ENCODE measurements at regions of chr15 and their contacts with region 1.

Region 1: DNA sequence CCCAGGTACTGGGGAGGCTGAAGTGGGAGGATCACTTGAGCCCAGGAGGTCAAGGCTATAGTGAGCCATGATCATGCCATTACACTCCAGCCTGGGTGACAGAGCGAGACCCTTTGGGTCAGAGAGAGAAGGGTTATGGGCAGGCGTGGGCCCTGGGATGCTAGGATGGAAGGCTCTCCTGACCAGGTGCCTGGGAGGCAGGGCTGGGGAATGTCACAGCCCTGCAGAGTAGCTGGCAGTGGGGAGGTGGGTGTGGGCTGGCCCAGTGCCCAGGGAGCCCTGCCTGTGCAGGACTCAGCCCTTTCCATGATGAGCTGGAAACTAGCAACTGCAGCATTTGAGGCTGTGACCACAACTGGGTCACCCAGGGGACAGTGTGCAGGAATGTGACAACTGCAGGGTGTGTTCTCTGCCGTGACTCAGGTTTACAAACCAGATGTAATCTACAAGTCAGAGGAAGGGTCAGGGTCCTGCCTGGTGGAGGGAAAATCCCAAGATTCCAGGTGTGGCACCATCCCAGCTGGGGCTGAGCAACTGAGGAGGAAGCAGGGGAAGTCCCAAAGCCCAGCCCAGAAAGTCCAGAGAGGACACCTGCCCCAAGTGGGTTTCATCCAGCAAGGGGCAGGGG is 45.4 kb downstream of the SLC28A1 start:
- DNase-seq: no peak
- CTCF ChIP-seq: no peak

Region 2: DNA sequence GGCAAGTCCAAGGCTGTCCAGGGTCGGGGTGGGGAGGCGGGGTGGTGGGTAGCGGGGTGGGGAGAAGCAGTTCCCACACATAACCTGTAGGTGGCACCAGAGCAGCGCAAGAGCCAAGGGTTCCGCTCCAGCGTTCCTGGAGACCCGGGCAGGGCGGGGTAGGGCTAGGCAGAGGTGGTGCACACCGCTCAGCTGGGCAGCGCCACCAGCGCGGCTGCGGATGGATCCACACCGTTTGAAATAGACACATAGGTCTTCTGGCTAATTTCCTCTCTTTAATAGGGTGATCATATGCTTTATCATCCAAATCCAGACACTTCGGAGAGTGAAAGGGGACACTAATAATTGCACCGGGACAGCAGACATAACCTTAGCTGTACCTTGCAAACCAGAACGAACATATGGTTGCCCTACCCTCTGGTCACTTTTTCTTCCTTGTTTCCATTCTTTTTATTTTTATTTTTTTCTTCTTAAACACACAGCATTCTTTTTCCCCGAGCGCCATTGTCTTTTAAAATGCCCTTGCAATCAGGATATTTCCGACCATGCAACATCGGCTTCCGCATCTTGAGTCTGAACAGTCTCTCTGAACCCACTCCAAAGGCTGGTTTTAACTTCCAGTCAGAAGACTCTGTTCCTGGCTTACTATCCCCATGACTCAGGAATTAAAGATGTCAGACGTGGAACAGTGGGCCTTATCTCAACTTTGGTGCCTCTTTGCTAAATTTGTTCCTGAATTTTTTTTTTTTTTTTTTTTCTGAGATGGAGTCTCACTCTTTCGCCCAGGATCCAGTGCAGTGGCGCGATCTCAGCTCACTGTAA is 341.6 kb before region 1 on chr15:
- CTCF ChIA-PET with region 1: interaction called, 50 read pairs
- POLR2A ChIA-PET with region 1: no interaction called
- DNase-seq: peak; percentile 90
- CTCF ChIP-seq: peak; percentile 68

Region 3: GRCh38 chr15:84600851-84601838 is 328.7 kb before region 1 on chr15 and contains the start of gene ZSCAN2:
- CTCF ChIA-PET with region 1: interaction called, 23 read pairs
- POLR2A ChIA-PET with region 1: no interaction called
- DNase-seq: peak; percentile 96
- CTCF ChIP-seq: no peak

Region 4: DNA sequence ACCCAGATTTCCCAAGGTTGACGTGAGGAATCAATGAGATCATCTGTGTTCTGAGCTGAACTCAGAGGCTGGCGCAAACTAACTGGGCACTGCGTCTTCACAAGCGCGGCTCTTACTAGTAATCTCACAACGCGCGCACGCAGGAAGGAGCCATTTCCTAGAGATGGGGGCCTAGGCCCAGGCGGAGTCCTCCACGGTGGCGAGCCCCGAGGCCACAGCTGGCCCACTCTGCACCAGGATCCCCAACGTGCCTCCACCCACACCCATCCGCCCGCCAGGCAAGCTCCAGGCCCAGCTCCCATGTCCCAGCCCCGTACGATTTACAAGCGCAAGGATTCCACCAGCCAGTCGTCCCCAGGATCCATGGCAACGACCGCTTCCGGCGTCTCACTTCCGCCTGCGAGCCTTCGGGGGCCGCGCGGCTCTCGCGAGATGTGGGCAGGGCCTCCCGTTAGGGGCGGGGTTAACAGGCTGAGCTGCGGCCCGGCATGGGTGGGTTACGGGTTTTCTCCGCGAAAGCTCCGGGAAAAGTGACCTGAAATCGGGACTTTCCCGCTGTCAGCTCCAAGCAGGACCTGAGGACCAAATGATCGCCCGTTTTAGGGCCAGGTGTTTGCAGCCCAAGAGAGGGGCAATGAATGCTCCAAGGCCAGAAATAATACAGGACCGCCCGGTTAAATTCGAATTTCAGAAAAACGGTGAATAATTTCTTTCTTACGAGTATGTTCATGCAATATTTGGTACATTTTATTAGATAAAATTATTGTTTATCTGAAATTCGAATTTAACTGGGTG is 275.8 kb before region 1 on chr15 and contains the start of gene WDR73:
- CTCF ChIA-PET with region 1: interaction called, 14 read pairs
- POLR2A ChIA-PET with region 1: no interaction called
- DNase-seq: peak; percentile 96
- CTCF ChIP-seq: no peak

Region 5: GRCh38 chr15:84783496-84784251 is 146.2 kb before region 1 on chr15:
- CTCF ChIA-PET with region 1: no interaction called
- POLR2A ChIA-PET with region 1: no interaction called
- DNase-seq: no peak
- CTCF ChIP-seq: no peak

Region 6: GRCh38 chr15:84821501-84822021 is 108.3 kb before region 1 on chr15:
- CTCF ChIA-PET with region 1: interaction called, 11 read pairs
- POLR2A ChIA-PET with region 1: no interaction called
- DNase-seq: no peak
- CTCF ChIP-seq: no peak

Region 7: DNA sequence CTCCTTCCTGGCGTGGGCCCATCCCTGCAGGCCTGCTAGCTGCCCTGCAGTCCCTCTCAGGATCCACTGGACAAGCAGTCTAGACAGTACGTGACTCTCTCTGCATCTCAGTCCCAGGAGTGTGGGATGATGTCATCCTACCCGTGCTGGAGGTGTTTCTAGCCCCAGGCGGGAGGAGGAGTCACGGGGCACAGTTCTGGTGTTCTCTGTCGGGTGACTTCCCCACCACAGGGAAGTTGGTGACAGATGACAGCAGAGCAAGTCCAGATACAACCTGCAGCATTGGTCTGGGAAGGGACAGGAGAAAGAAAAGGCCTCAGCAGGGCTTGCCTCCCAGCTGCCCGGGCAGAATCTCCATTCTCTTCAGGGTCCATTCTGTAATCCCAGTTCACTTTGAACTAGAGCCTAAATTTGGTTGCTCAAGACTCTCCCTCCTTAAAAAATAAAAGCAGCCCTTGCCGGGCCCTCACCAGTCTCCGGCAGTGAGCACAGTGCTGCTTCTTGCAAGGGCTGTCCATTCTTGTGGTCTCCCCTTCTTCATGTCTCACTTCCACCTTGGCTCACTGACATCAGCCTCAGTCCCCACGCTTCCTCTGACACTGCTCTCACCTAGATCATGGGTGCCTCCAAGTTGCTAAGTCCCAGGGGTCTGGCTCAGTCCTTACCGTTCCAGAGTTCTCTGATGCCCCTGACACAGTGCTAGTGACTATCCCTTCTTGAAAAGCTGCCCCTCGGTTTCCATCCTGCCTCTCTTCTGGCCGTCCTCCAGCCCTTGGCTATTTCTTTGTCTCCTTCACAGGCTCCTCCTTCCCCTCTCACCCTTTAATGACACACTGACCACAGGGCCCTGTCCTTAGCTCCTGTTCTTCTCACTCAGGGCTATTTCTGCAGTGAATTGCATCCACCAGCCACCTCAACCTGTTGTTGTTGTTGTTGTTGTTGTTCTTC is 14.6 kb before region 1 on chr15:
- CTCF ChIA-PET with region 1: interaction called, 34 read pairs
- POLR2A ChIA-PET with region 1: no interaction called
- DNase-seq: peak; percentile 89
- CTCF ChIP-seq: no peak

Region 8: DNA sequence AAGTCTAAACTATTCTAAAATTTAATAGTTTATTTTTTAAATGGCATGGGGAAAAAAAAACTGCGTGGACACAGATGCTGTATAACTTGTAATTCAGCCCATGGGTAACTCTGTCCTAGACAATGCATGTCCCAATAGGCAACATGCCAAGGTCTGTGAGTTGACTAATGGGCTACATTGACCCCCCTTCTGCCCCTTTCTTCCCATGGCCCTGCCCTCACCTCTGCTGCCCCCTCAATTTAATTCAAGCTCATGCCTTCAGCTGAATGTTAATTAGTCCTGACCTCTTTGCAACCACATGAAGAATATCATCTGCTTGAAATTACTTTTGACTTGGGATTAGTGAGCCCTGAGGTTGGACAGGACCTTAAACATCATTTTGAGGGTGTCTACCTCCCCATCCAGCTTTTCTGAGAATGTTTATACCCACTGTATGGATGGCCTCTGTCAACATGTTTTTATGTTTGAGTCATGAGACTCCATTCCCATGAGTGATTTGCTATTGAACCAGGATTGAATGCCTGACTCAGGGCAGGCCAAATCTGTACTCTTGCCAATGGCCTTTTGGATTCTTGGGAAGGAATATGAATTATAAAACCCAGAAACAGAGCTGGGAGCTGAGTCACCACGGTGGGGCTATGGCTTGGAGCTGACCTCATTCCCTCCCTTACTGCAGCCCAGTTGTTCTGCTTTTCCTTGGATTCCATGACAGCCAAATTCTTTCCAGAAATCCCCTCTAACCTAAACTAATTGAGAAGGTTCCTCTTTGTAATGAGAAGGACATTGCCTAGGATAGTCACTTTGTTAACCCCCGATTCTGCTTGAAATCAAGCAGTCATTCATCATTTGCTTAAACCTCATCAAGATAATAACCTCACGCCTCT is 18.3 kb after region 1 on chr15:
- CTCF ChIA-PET with region 1: interaction called, 12 read pairs
- POLR2A ChIA-PET with region 1: no interaction called
- DNase-seq: no peak
- CTCF ChIP-seq: no peak

Region 9: DNA sequence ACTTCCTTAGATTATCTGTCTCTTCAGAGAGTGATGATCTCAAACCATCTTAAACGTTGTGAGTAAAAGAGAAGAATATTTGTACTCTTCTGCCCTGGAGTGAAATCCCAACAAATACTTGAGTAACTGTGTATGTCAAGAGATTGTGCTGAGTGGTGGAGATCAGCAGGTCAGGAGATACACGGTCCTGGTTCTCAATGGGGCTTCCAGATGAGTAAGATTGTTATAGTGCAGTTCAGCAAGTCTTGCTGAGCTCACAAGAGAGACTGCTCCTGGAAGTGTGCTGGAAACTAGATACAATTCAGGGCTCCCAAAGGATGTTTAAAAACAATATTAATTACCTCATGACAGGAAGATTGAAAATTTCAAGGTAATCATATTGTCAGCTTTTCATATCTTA is 634.8 kb after region 1 on chr15:
- CTCF ChIA-PET with region 1: no interaction called
- POLR2A ChIA-PET with region 1: no interaction called
- DNase-seq: no peak
- CTCF ChIP-seq: no peak

Measured in GM10248 (cell line).